ENCODE measurements at regions of chrX and their contacts with region 1.

Region 1: GRCh38 chrX:14095702-14096101 is 66.0 kb upstream of the GEMIN8 start:
- DNase-seq: no peak
- ATAC-seq: peak in 2 of 4 donors; percentile 26 to 28
- H3K4me3 ChIP-seq: no peak overlapping the region
- H3K27ac ChIP-seq: no peak overlapping the region
- H3K4me1 ChIP-seq: no peaks in the 10 kb centered on the region
- H3K27me3 ChIP-seq: peaks cover 0 to 25% (median 0%) of the 10 kb centered on the region in 9 donors
- CTCF ChIP-seq: peak; percentile 35 to 68 (median 48)
- POLR2A ChIP-seq: no peak

Region 2: GRCh38 chrX:12901486-12901885 is 1194.2 kb before region 1 on chrX:
- intact Hi-C with region 1: no loop called
- DNase-seq: peak in 4 of 5 donors; percentile 25 to 64 (median 49)
- ATAC-seq: no peak
- H3K4me3 ChIP-seq: no peak overlapping the region
- H3K27ac ChIP-seq: no peak overlapping the region
- H3K4me1 ChIP-seq: peaks cover 0 to 8% (median 0%) of the 10 kb centered on the region in 12 donors
- H3K27me3 ChIP-seq: peaks cover 0 to 3% (median 0%) of the 10 kb centered on the region in 9 donors
- CTCF ChIP-seq: peak; percentile 40 to 70 (median 58)
- POLR2A ChIP-seq: no peak

Region 3: DNA sequence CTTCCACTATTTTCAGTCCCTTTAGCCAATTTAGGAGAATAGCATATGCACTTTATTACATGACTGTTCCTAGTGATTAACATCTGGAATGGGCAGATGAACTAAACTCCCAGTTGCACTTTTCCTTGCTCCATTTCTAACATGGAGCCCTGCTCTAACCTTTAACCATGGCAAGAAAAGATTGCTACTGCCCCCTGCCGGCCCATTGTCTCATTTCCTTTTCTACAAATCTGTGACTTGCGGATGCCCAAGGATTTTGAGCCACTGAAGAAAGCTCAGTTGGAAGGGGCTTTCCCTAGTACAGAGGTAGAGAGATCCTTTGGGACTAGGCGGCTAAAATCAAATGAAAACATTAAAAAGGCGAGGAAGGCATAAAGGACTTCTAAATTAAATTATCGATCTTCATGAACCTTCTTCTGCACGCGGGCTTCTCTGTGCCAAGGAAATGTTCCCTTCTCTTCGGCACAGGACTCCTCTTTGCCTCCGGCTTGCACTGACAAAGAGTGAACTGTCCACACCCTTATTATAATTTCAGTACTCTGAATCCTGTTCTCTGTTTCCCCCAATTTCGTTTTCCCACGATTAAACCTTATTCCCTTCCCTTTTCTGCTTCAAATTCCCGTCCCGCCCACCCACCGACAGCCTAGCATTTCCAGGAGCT is 433.1 kb after region 1 on chrX:
- intact Hi-C with region 1: loop called in 3 of 10 experiments (anchors 5 kb)
- DNase-seq: peak; percentile 4 to 37 (median 28)
- ATAC-seq: no peak
- H3K4me3 ChIP-seq: no peak overlapping the region
- H3K27ac ChIP-seq: no peak overlapping the region
- H3K4me1 ChIP-seq: no peaks in the 10 kb centered on the region
- H3K27me3 ChIP-seq: peaks cover 0 to 7% (median 0%) of the 10 kb centered on the region in 9 donors
- CTCF ChIP-seq: peak in 10 of 12 donors; percentile 18 to 42 (median 34)
- POLR2A ChIP-seq: no peak

Region 4: GRCh38 chrX:15143050-15143824 is 1047.5 kb after region 1 on chrX:
- intact Hi-C with region 1: loop called in 6 of 10 experiments (anchors 5 to 10 kb)
- DNase-seq: peak in 4 of 5 donors; percentile 8 to 31 (median 24)
- ATAC-seq: peak in 1 of 4 donors; percentile 53
- H3K4me3 ChIP-seq: no peak overlapping the region
- H3K27ac ChIP-seq: no peak overlapping the region
- H3K4me1 ChIP-seq: no peaks in the 10 kb centered on the region
- H3K27me3 ChIP-seq: peaks cover 0 to 26% (median 0%) of the 10 kb centered on the region in 9 donors
- CTCF ChIP-seq: peak; percentile 48 to 71 (median 59)
- POLR2A ChIP-seq: no peak

Region 5: DNA sequence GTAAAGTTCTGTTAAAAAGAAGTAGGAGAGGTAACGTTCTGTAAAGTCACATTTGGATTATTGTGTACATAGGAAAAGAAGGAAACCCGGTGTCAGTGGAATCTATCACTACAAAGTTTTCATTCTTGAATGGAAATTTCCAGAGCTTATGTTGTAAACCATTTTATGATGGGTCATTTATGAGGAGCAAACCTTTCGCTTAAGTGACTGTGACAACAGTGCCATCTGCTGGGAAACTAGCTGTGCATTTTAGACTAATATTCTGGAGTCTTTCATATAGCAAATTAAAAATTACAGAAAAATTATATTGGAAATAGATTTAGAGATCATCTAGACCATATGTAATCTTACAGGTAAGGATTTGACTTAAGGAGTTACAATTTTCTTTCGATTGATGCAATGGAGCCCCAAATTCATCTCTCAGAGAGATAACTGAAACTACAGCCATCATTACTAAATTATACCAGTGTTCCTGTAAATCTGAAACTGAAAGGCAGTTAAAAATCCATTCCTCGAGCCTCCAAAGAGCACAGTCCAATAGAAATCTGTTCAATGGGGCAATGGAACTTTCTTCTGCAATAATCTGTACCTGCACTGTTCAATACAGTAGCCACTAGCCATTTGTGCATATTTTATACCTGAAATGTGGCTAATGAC is 1147.3 kb after region 1 on chrX:
- intact Hi-C with region 1: loop called in 4 of 10 experiments (anchors 5 to 10 kb)
- DNase-seq: peak in 1 of 5 donors; percentile 6
- ATAC-seq: no peak
- H3K4me3 ChIP-seq: no peak overlapping the region
- H3K27ac ChIP-seq: no peak overlapping the region
- H3K4me1 ChIP-seq: no peaks in the 10 kb centered on the region
- H3K27me3 ChIP-seq: peaks cover 0 to 13% (median 0%) of the 10 kb centered on the region in 9 donors
- CTCF ChIP-seq: peak; percentile 17 to 64 (median 49)
- POLR2A ChIP-seq: no peak